ENCODE measurements at regions of chr3 and their contacts with region 1.

Region 1: GRCh38 chr3:130345487-130346079 is at the start of gene COL6A5:
- DNase-seq: peak; percentile 10 to 80 (median 30)
- ATAC-seq: peak; percentile 83
- H3K4me3 ChIP-seq: peak within 1 kb of the TSS; percentile 59
- H3K27ac ChIP-seq: peak within 1 kb of the TSS; percentile 96
- H3K4me1 ChIP-seq: peaks cover 4 to 40% of the 10 kb centered on the region in 2 experiments; a peak in 4 of 5 replicates
- H3K27me3 ChIP-seq: no peaks in the 10 kb centered on the region
- CTCF ChIP-seq: no peak
- EP300 ChIP-seq: peak; percentile 14; the same call in 1 of the 2 replicates
- POLR2A ChIP-seq: no peak
- RAD21 ChIP-seq: no peak
- polyA plus RNA-seq, gene COL6A5: 1.5 to 2.3 TPM

Region 2: GRCh38 chr3:130379274-130379673 is 33.7 kb after region 1 on chr3:
- CTCF ChIA-PET with region 1: no interaction called
- POLR2A ChIA-PET with region 1: interaction called, 4 read pairs
- in situ Hi-C with region 1: no loop called
- intact Hi-C with region 1: loop called (anchors 5 kb)
- DNase-seq: no peak
- ATAC-seq: no peak
- H3K4me3 ChIP-seq: no peak overlapping the region
- H3K27ac ChIP-seq: no peak overlapping the region; the same call in 2 of the 3 replicates
- H3K4me1 ChIP-seq: peaks cover 25 to 63% of the 10 kb centered on the region in 2 experiments
- H3K27me3 ChIP-seq: no peaks in the 10 kb centered on the region
- CTCF ChIP-seq: no peak
- EP300 ChIP-seq: no peak
- POLR2A ChIP-seq: no peak
- RAD21 ChIP-seq: no peak

Region 3: DNA sequence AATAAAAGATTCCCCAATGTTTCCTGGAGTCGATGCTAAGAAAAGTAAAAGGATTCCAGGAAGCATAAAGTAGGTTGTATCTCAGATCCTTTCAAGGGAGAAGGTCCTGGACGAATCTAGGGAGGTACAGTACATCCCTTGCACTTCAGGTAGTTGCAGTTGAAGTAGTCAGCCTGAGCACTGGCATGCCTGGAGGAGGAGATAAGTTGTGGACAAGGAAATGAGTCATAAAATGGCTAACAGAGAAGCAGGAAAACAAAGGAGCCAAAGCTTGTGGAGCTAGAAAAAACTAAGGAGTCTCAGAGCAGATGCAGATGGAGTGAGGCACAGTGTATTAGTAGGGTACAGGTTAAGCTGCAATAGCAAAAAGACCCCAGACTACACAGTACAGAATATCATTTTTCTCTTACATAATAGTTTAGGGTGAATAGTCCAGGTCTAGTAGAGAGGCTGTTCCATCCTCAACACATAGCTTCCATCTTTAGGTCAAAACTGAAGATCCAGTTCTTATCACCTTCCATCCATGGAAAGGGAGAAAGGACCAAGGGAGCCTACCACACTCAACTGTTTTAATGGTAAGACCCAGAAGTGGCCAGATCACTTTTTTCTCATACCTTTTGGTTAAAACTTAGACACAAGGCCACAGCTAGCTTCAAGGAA is 41.2 kb after region 1 on chr3:
- CTCF ChIA-PET with region 1: no interaction called
- POLR2A ChIA-PET with region 1: no interaction called
- in situ Hi-C with region 1: no loop called
- intact Hi-C with region 1: loop called (anchors 5 kb)
- DNase-seq: peak; percentile 67 to 89 (median 72)
- ATAC-seq: peak; percentile 86
- H3K4me3 ChIP-seq: no peak overlapping the region
- H3K27ac ChIP-seq: peak overlapping the region; percentile 87
- H3K4me1 ChIP-seq: peaks cover 9 to 85% of the 10 kb centered on the region in 2 experiments; a peak in 4 of 5 replicates
- H3K27me3 ChIP-seq: no peaks in the 10 kb centered on the region
- CTCF ChIP-seq: no peak
- EP300 ChIP-seq: peak; percentile 87
- POLR2A ChIP-seq: no peak
- RAD21 ChIP-seq: no peak